ENCODE measurements at regions of chr14 and their contacts with region 1.

Region 1: DNA sequence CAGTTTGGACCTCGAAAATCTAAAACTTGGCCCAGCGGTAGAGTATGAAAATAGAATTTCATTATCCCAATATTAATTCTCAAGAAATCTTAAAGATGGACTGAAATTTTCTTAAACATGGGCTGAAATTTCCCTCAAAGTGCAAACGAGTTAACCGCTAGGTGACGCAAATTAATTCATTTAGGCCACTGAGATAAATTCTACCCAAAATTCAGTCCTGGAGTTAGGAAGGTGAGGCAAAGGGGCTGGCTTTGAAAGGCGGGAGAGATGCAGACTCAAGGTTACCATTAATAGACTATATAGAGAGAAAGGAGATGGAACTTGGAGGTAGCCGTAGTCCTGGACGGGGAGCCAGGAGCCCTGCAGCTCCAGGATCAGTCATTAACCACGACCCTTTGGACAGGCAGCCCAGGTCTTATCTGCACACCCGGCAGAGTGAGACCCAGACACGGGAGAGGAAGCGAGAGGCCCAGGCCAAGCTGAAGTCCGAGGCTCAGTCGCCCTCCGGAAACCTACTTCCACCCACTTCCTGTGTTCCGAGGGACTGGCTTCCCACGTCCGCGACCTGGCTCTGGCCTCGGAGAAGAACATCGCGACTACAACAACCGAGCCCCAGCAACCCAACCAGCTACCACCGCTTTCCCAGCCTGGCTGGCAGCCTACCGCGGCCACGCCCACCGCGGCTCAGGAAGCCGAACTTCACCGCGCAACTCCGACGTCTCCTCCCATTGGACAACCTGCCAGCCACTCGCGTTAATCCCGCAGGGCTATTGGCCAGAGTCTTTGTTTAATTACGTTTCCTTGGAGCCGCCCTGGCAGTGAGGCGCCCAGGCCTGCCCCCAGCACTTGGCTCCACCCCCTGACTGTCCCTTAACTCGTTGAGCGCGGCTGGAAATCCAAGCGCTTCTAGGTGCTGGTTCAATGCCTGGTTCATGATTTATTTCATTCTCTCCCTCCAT is at the start of gene EFCAB11:
- DNase-seq: peak; percentile 89 to 99 (median 93)
- ATAC-seq: peak; percentile 80
- H3K4me3 ChIP-seq: peak within 1 kb of the TSS; percentile 68 to 69
- H3K4me3 Mint-ChIP-seq: peak within 1 kb of the TSS; percentile 92
- H3K27ac ChIP-seq: peak within 1 kb of the TSS; percentile 99
- H3K27ac Mint-ChIP-seq: peak within 1 kb of the TSS; percentile 88
- H3K4me1 ChIP-seq: peaks cover 34% of the 10 kb centered on the region
- H3K4me1 Mint-ChIP-seq: peaks cover 40% of the 10 kb centered on the region
- H3K27me3 ChIP-seq: no peaks in the 10 kb centered on the region
- H3K27me3 Mint-ChIP-seq: no peaks in the 10 kb centered on the region
- CTCF ChIP-seq: no peak
- total RNA-seq, gene EFCAB11: 0.76 to 1.1 TPM

Region 2: GRCh38 chr14:88005978-88006851 is 1948.1 kb before region 1 on chr14:
- CTCF ChIA-PET with region 1: no interaction called
- POLR2A ChIA-PET with region 1: interaction called, 3 read pairs
- intact Hi-C with region 1: loop called in 1 of 2 experiments (anchors 10 kb)
- DNase-seq: peak; percentile 28 to 95 (median 66)
- ATAC-seq: peak; percentile 88
- H3K4me3 ChIP-seq: peak overlapping the region; percentile 69 to 76
- H3K4me3 Mint-ChIP-seq: peak overlapping the region; percentile 88
- H3K27ac ChIP-seq: peak overlapping the region; percentile 74 to 94
- H3K27ac Mint-ChIP-seq: peak overlapping the region; percentile 96
- H3K4me1 ChIP-seq: peaks cover 63% of the 10 kb centered on the region
- H3K4me1 Mint-ChIP-seq: peaks cover 81% of the 10 kb centered on the region
- H3K27me3 ChIP-seq: no peaks in the 10 kb centered on the region
- H3K27me3 Mint-ChIP-seq: no peaks in the 10 kb centered on the region
- CTCF ChIP-seq: no peak

Region 3: DNA sequence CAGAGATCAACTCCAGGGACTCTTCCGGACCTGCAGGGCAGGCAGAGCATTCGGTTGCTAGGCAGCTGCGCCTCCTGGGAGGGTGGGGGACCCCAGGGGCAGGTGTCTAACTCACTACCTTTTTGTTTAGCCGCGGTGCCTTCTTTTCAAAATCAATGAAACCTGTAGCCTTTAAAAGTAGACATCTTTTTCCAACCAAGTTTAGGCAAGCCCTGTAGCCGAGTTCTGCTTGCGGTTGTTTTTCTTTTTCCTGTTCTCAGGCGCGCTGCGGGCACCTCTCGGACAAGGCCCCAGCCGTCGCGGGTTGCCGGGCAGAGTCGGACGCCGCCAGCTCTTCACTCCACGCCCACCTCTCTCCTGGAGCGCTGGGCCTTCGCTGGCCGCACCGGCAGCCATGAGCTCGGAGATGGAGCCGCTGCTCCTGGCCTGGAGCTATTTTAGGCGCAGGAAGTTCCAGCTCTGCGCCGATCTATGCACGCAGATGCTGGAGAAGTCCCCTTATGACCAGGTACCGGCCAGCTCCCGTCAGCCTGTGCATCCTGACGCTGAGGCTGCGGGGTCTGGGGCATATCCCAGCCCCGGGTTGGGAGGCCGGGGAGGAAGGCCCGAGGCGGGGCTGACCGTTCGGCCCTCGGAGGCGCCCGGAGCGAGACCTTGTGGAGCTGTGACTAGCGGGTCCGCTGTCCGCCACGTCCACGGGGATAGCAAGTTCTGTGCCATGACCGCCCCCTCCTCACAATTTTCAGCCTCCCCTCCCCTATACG is 1129.9 kb before region 1 on chr14 and contains the start of gene TTC8:
- CTCF ChIA-PET with region 1: no interaction called
- POLR2A ChIA-PET with region 1: interaction called, 3 read pairs
- intact Hi-C with region 1: loop called (anchors 10 kb)
- DNase-seq: peak; percentile 71 to 92 (median 85)
- ATAC-seq: peak; percentile 95
- H3K4me3 ChIP-seq: peak within 1 kb of the TSS; percentile 81 to 89
- H3K4me3 Mint-ChIP-seq: peak within 1 kb of the TSS; percentile 81
- H3K27ac ChIP-seq: peak within 1 kb of the TSS; percentile 69 to 90
- H3K27ac Mint-ChIP-seq: peak within 1 kb of the TSS; percentile 99
- H3K4me1 ChIP-seq: peaks cover 10% of the 10 kb centered on the region
- H3K4me1 Mint-ChIP-seq: peaks cover 13% of the 10 kb centered on the region
- H3K27me3 ChIP-seq: no peaks in the 10 kb centered on the region
- H3K27me3 Mint-ChIP-seq: peaks cover 5% of the 10 kb centered on the region
- CTCF ChIP-seq: no peak
- total RNA-seq, gene TTC8: 1.3 to 1.9 TPM

Region 4: GRCh38 chr14:89720741-89721315 is 233.5 kb before region 1 on chr14:
- CTCF ChIA-PET with region 1: no interaction called
- POLR2A ChIA-PET with region 1: no interaction called
- intact Hi-C with region 1: loop called in 1 of 2 experiments (anchors 2 kb)
- DNase-seq: peak; percentile 63 to 96 (median 77)
- ATAC-seq: peak; percentile 89
- H3K4me3 ChIP-seq: peak overlapping the region; percentile 17 to 29
- H3K4me3 Mint-ChIP-seq: peak overlapping the region; percentile 64
- H3K27ac ChIP-seq: peak overlapping the region; percentile 70 to 89
- H3K27ac Mint-ChIP-seq: peak overlapping the region; percentile 97
- H3K4me1 ChIP-seq: peaks cover 86% of the 10 kb centered on the region
- H3K4me1 Mint-ChIP-seq: peaks cover 85% of the 10 kb centered on the region
- H3K27me3 ChIP-seq: no peaks in the 10 kb centered on the region
- H3K27me3 Mint-ChIP-seq: no peaks in the 10 kb centered on the region
- CTCF ChIP-seq: no peak

Region 5: DNA sequence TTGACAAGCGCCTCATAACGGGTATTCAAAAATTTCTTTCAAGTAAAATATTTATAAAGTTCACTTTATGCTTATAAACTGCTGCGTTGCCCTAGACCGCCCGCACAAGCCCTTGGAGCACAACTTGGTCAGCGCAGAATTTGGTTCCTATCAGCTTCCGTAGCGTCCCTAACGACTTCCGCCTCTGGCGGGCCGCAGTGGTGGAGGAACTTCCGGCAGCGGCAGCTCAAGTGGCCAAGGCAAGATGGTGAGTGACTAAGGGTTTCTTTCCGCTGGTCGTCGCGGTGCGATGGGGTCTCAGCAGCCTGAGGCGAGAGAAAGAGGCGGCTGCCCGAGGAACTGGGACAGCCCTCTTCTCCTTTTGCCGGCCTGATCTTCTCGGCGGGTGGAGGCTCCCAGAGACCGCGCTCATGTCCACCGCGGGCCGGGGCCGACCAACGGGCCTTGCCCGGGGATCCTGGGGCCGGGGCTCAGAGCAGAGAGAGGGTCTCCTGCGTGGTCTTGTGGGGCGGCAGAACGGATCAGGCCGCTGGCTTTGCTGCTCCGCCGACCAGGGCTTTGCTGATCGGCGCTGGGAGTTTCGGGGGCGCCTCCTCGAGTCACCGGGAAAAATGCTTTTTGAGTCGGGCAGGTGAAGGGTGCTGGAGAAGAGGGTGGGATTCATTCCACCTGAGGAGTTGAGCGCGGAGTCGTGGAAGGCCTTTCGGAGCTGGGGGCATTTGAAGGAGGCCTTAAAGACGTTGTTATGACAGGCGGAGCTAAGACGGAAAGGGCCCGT is 302.2 kb after region 1 on chr14 and contains the start of gene PSMC1:
- CTCF ChIA-PET with region 1: no interaction called
- POLR2A ChIA-PET with region 1: interaction called, 9 read pairs
- intact Hi-C with region 1: loop called (anchors 1 to 5 kb)
- DNase-seq: peak; percentile 78 to 92 (median 85)
- ATAC-seq: peak; percentile 94
- H3K4me3 ChIP-seq: peak within 1 kb of the TSS; percentile 79 to 95
- H3K4me3 Mint-ChIP-seq: peak within 1 kb of the TSS; percentile 99
- H3K27ac ChIP-seq: peak within 1 kb of the TSS; percentile 73 to 80
- H3K27ac Mint-ChIP-seq: peak within 1 kb of the TSS; percentile 97
- H3K4me1 ChIP-seq: peaks cover 17% of the 10 kb centered on the region
- H3K4me1 Mint-ChIP-seq: peaks cover 32% of the 10 kb centered on the region
- H3K27me3 ChIP-seq: no peaks in the 10 kb centered on the region
- H3K27me3 Mint-ChIP-seq: peaks cover 7% of the 10 kb centered on the region
- CTCF ChIP-seq: no peak
- total RNA-seq, gene PSMC1: 76.8 to 85.0 TPM

Region 6: GRCh38 chr14:90399541-90400444 is 445.4 kb after region 1 on chr14:
- CTCF ChIA-PET with region 1: no interaction called
- POLR2A ChIA-PET with region 1: no interaction called
- intact Hi-C with region 1: loop called (anchors 5 kb)
- DNase-seq: peak; percentile 73 to 95 (median 85)
- ATAC-seq: peak; percentile 47
- H3K4me3 ChIP-seq: peak overlapping the region; percentile 59 to 75
- H3K4me3 Mint-ChIP-seq: peak overlapping the region; percentile 99
- H3K27ac ChIP-seq: peak overlapping the region; percentile 89
- H3K27ac Mint-ChIP-seq: peak overlapping the region; percentile 99
- H3K4me1 ChIP-seq: peaks cover 56% of the 10 kb centered on the region
- H3K4me1 Mint-ChIP-seq: peaks cover 60% of the 10 kb centered on the region
- H3K27me3 ChIP-seq: no peaks in the 10 kb centered on the region
- H3K27me3 Mint-ChIP-seq: no peaks in the 10 kb centered on the region
- CTCF ChIP-seq: peak; percentile 100

Region 7: DNA sequence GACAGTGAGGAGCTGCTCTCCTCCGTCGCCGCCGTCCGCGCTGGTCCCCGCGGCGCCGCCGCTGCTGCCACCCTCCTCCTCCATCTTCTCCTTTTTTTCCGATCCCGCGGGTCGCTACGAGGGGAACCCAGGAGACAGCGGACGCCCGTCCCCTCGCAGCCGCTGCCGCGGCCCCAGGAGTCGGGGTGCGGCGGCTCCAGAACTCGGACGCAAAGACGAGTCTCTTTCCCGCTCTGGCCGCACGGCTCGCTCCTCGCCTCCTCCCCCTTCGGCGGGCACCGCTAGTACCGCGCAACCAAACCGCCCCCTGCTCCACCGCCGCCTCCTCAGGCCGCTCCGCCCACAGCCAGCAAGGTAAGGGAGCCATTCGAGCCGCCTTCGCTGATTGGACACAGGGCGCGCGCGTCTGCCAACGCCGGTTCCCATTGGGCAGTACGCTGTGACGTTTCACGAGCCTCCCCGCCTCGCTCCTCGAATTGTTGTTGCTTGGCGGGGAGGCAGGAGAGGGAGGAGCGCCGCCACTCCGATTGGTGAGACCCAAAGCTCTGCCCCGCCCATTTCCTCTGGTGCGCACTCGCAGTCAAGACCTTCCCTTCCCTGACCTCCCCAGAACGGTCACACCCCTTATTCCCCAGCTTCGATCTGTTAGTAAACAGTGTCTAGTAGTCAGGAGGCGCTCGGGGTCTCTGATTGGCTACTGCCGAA is 1106.2 kb after region 1 on chr14 and contains the start of gene RPS6KA5:
- CTCF ChIA-PET with region 1: no interaction called
- POLR2A ChIA-PET with region 1: no interaction called
- intact Hi-C with region 1: loop called (anchors 10 kb)
- DNase-seq: peak; percentile 99 to 100 (median 100)
- ATAC-seq: peak; percentile 82
- H3K4me3 ChIP-seq: peak within 1 kb of the TSS; percentile 66 to 84
- H3K4me3 Mint-ChIP-seq: peak within 1 kb of the TSS; percentile 81
- H3K27ac ChIP-seq: peak within 1 kb of the TSS; percentile 94 to 96
- H3K27ac Mint-ChIP-seq: peak within 1 kb of the TSS; percentile 35
- H3K4me1 ChIP-seq: peaks cover 38% of the 10 kb centered on the region
- H3K4me1 Mint-ChIP-seq: peaks cover 55% of the 10 kb centered on the region
- H3K27me3 ChIP-seq: no peaks in the 10 kb centered on the region
- H3K27me3 Mint-ChIP-seq: no peaks in the 10 kb centered on the region
- CTCF ChIP-seq: no peak
- total RNA-seq, gene RPS6KA5: 17.7 to 18.3 TPM